ENCODE measurements at regions of chrX and their contacts with region 1.

Region 1: GRCh38 chrX:155216179-155216939 is at the start of gene VBP1:
- DNase-seq: peak; percentile 84 to 99 (median 90)

Region 2: GRCh38 chrX:155070975-155071693 is 145.2 kb before region 1 on chrX and contains the starts of genes BRCC3, CMC4 and MTCP1:
- intact Hi-C with region 1: loop called (anchors 10 kb)
- DNase-seq: peak; percentile 63 to 97 (median 76)

Region 3: DNA sequence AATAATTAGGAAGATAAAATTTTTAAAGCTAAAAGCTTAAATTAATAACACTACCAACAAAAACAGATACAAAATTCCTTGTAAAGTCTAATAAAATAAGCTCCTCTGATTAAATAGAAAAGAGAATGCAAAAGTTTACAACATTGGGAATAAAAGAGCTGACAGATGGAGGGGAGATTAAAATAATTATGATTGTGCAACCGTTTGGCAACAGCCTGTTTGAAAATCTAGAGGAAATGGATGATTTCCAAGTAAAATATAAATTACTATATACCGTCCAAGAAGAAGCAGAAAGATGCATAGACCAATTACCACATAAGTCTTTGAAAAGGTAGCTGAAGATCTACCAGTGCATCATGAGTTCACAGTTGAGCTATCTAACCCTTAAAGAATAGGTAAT is 46.5 kb before region 1 on chrX:
- intact Hi-C with region 1: no loop called
- DNase-seq: no peak

Region 4: GRCh38 chrX:155263854-155264628 is 47.7 kb after region 1 on chrX and contains the start of gene RAB39B:
- intact Hi-C with region 1: loop called (anchors 1 kb)
- DNase-seq: peak; percentile 59 to 96 (median 72)